ENCODE measurements at regions of chr1 and their contacts with region 1.

Region 1: GRCh38 chr1:217456261-217456660 is 174.6 kb downstream of the GPATCH2 start:
- DNase-seq: no peak
- ATAC-seq: no peak
- H3K4me3 ChIP-seq: no peak overlapping the region
- H3K27ac ChIP-seq: no peak overlapping the region
- H3K4me1 ChIP-seq: no peaks in the 10 kb centered on the region
- H3K27me3 ChIP-seq: no peaks in the 10 kb centered on the region
- CTCF ChIP-seq: no peak
- POLR2A ChIP-seq: no peak
- RAD21 ChIP-seq: no peak

Region 2: DNA sequence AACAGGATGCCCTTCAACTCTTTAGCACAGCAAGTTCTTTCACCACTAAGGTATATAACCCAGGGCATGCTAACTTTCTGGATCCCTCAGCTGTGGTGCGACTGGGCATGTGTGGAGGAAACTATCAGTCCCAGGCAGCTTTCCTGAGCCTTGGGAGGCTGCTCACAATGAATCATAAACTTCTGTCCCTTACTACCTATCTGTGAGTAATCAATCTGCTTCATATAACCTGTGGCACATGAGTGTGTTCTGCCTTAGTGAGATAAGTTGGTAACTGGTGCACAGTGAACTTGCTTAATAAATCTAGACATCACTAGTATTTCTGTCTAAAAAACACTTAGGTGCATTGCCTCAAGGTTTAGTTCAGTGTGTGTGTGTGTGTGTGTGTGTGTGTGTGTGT is 16.7 kb after region 1 on chr1:
- CTCF ChIA-PET with region 1: interaction called, 11 read pairs
- POLR2A ChIA-PET with region 1: no interaction called
- dilution Hi-C with region 1: no loop called
- in situ Hi-C with region 1: no loop called
- intact Hi-C with region 1: no loop called
- DNase-seq: peak; percentile 17
- ATAC-seq: no peak
- H3K4me3 ChIP-seq: no peak overlapping the region
- H3K27ac ChIP-seq: no peak overlapping the region
- H3K4me1 ChIP-seq: no peaks in the 10 kb centered on the region
- H3K27me3 ChIP-seq: no peaks in the 10 kb centered on the region
- CTCF ChIP-seq: no peak
- POLR2A ChIP-seq: no peak
- RAD21 ChIP-seq: no peak